ENCODE measurements at regions of chr14 and their contacts with region 1.

Region 1: DNA sequence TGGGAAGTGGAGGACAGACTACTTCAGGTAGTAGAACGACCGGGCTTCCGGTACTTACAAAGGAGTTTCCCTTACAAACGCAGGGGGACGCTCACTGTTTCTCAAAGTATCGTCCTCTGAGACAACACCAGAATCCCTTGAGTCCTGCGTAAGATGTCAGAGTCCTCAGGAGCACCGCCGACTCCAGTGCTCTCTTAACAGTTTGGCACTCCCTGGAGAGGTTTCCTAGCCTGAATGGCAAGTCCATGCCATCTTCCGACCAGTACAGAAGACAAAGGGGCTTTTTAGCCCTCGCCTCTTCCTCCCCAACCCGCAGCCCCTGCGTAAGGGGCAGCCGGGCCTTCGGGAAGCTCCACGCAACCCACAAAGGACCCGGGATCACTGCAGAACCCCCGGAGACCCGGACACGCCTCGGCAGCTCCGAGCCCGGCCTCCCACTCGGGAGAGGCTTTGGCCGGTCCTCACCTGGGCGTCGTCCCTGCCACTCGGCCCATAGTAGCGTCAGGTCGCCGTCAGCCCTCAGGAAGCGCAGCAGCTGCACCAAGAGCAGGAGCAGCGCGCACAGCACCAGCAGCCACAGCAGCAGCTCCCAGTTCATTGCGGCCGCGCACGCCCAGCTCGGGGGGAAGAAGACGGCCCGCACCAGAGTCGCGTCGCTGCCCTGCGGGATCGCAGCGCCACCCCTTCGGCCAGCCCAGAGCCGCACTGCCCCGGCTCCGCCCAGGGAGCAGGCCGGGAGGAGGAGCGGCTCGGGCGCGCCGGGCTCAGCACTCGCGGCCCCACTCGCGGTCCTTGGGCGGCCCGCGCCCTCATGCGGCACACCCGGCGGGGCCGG is at the start of gene DHRS7:
- DNase-seq: peak; percentile 47 to 75 (median 60)
- ATAC-seq: peak; percentile 85
- H3K4me3 ChIP-seq: peak within 1 kb of the TSS; percentile 85
- H3K4me3 Mint-ChIP-seq: peak within 1 kb of the TSS; percentile 86 to 99 (median 95)
- H3K27ac ChIP-seq: peak within 1 kb of the TSS; percentile 90
- H3K27ac Mint-ChIP-seq: peak within 1 kb of the TSS; percentile 91 to 99 (median 97)
- H3K4me1 ChIP-seq: peaks cover 20 to 27% of the 10 kb centered on the region in 2 donors
- H3K4me1 Mint-ChIP-seq: peaks cover 22 to 53% (median 42%) of the 10 kb centered on the region in 7 donors
- H3K27me3 ChIP-seq: no peaks in the 10 kb centered on the region
- H3K27me3 Mint-ChIP-seq: no peaks in the 10 kb centered on the region
- total RNA-seq, gene DHRS7: 29.9 to 50.9 (median 38.0) TPM

Region 2: DNA sequence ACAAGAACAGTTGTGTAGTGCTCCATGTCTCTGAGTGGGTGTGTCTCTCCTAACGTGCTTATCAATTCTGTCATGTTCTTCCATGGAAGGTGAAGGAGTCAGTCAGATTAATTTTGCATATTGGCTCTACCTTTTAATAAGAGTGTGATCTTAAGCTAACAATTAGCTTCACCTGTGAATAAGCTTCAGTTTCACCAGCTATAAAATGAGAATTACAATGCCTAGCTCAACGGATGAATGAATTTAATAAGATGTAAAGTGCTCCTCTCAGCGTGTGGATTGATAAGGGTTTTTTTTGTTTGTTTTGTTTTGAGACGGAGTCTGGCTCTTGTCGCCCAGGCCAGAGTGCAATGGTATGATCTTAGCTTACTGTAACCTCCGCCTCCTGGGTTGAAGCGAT is 621.1 kb before region 1 on chr14:
- CTCF ChIA-PET with region 1: no interaction called
- POLR2A ChIA-PET with region 1: no interaction called
- intact Hi-C with region 1: no loop called
- DNase-seq: no peak
- ATAC-seq: no peak
- H3K4me3 ChIP-seq: no peak overlapping the region
- H3K4me3 Mint-ChIP-seq: no peak overlapping the region
- H3K27ac ChIP-seq: no peak overlapping the region
- H3K27ac Mint-ChIP-seq: no peak overlapping the region
- H3K4me1 ChIP-seq: no peaks in the 10 kb centered on the region
- H3K4me1 Mint-ChIP-seq: no peaks in the 10 kb centered on the region
- H3K27me3 ChIP-seq: no peaks in the 10 kb centered on the region
- H3K27me3 Mint-ChIP-seq: peaks cover 9 to 39% (median 17%) of the 10 kb centered on the region in 5 donors

Region 3: DNA sequence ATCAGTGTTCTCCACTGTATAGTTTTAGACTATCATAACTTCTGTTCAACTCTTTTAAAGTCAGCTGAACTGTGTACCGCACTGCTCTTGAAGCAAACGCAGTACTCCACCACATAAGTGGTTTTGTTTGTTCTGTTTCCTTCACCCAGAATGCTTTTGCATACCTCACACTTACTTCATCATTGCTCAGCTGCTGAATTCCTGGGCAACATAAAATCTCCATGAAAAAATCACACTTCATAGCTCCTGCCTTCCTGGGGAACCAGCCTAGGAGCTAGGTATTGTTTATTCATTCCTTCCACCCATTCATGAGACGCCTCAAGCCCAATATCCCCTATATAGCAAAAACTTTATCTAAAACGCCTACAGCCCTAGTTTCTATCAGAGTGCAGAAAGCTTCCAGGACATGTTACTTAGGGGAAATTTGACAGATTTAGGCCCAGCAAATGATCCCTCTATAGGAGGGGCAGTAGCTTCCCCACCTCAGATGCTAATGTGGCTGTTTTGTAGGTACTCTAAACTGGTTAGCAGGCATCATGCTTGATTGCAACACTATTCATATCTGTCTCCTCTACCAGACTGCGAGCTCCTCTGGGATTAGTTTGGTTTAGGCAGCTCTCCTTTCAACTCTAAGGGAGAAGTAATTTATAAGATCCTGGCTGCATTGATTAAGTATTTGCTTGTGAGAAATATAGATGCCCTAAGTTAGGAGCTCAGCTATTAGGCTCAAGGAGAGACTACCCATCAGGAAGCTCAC is 200.5 kb before region 1 on chr14:
- CTCF ChIA-PET with region 1: interaction called, 6 read pairs
- POLR2A ChIA-PET with region 1: interaction called, 3 read pairs
- intact Hi-C with region 1: loop called in 1 of 2 experiments (anchors 1 kb)
- DNase-seq: peak in 6 of 9 donors; percentile 6 to 38 (median 20)
- ATAC-seq: peak; percentile 44
- H3K4me3 ChIP-seq: no peak overlapping the region
- H3K4me3 Mint-ChIP-seq: peak overlapping the region; percentile 77 to 95 (median 88)
- H3K27ac ChIP-seq: no peak overlapping the region
- H3K27ac Mint-ChIP-seq: peak overlapping the region in 8 of 9 donors; percentile 40 to 99 (median 88)
- H3K4me1 ChIP-seq: no peaks in the 10 kb centered on the region
- H3K4me1 Mint-ChIP-seq: peaks cover 3 to 14% (median 10%) of the 10 kb centered on the region in 7 donors
- H3K27me3 ChIP-seq: no peaks in the 10 kb centered on the region
- H3K27me3 Mint-ChIP-seq: peaks cover 0 to 15% (median 5%) of the 10 kb centered on the region in 5 donors

Region 4: GRCh38 chr14:60064491-60065072 is 100.3 kb before region 1 on chr14:
- CTCF ChIA-PET with region 1: interaction called, 4 read pairs
- POLR2A ChIA-PET with region 1: no interaction called
- intact Hi-C with region 1: loop called in 1 of 2 experiments (anchors 1 kb)
- DNase-seq: peak in 4 of 9 donors; percentile 28 to 39 (median 36)
- ATAC-seq: peak; percentile 70
- H3K4me3 ChIP-seq: no peak overlapping the region
- H3K4me3 Mint-ChIP-seq: no peak overlapping the region
- H3K27ac ChIP-seq: no peak overlapping the region
- H3K27ac Mint-ChIP-seq: no peak overlapping the region
- H3K4me1 ChIP-seq: no peaks in the 10 kb centered on the region
- H3K4me1 Mint-ChIP-seq: no peaks in the 10 kb centered on the region
- H3K27me3 ChIP-seq: no peaks in the 10 kb centered on the region
- H3K27me3 Mint-ChIP-seq: peaks cover 0 to 7% (median 4%) of the 10 kb centered on the region in 5 donors

Region 5: DNA sequence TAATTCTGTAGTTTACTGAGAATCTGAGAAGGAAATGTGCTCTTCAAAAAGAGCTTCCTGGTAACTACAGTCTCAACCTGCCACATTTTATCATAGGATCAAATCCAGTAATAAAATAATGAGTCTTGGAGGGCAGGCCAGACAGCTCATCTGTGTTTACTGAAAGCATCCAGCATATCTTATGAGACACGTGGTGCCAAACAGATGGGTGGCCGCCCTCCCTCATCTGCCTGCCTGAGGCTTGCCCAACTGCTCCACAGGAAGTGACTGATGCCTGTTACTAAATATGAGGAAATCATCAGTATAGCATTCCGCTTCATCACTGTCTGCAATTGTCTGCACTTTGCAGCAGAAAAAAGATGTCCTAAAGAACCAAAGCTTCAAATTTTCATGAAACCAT is 13.2 kb before region 1 on chr14:
- CTCF ChIA-PET with region 1: interaction called, 5 read pairs
- POLR2A ChIA-PET with region 1: interaction called, 39 read pairs
- intact Hi-C with region 1: loop called (anchors 1 kb)
- DNase-seq: peak; percentile 13 to 69 (median 60)
- ATAC-seq: peak; percentile 98
- H3K4me3 ChIP-seq: no peak overlapping the region
- H3K4me3 Mint-ChIP-seq: peak overlapping the region in 8 of 10 donors; percentile 3 to 43 (median 36)
- H3K27ac ChIP-seq: peak overlapping the region; percentile 52
- H3K27ac Mint-ChIP-seq: peak overlapping the region; percentile 84 to 94 (median 88)
- H3K4me1 ChIP-seq: peaks cover 23% of the 10 kb centered on the region in 2 donors
- H3K4me1 Mint-ChIP-seq: peaks cover 28 to 56% (median 48%) of the 10 kb centered on the region in 7 donors
- H3K27me3 ChIP-seq: no peaks in the 10 kb centered on the region
- H3K27me3 Mint-ChIP-seq: no peaks in the 10 kb centered on the region

Measured in naive thymus-derived CD4-positive, alpha-beta T cell (primary cell).